Naive thymus-derived CD4-positive, alpha-beta T cell (primary cell): ENCODE measurements at regions of chr16 and their contacts with region 1.

Region 1: DNA sequence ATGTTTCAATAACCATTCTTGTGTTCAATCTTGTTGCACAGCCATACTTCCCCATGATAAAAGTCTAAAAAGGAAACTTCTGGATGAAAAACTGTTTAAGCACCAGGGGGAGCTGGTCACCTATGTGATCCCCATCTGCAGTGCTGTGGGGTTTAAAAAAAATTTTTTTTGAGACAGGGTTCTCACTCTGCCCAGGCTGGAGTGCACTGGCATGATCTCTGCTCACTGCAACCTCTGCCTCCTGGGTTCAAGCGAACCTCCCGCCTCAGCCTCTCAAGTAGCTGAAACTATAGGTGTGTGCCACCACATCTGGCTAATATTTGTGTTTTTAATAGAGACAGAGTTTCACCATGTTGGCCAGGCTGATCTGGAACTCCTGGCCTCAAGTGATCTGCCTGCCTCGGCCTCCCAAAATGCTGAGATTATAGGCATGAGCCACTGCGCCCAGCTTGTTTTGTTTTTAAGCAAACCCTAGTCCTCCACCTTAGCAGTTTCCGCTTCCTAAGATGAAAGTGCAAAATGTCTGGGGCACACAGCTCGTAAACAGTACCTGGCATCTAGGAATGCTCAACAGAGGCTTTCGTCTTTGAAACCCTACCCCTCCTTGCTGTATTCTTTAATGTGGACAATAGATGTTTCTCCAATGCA is 25.4 kb downstream of the DNAJA2 start:
- DNase-seq: peak in 7 of 9 donors; percentile 11 to 49 (median 42)
- ATAC-seq: peak; percentile 89
- H3K4me3 ChIP-seq: no peak overlapping the region
- H3K4me3 Mint-ChIP-seq: no peak overlapping the region
- H3K27ac ChIP-seq: no peak overlapping the region
- H3K27ac Mint-ChIP-seq: no peak overlapping the region
- H3K4me1 ChIP-seq: no peaks in the 10 kb centered on the region
- H3K4me1 Mint-ChIP-seq: peaks cover 0 to 13% (median under 1%) of the 10 kb centered on the region in 7 donors
- H3K27me3 ChIP-seq: no peaks in the 10 kb centered on the region
- H3K27me3 Mint-ChIP-seq: no peaks in the 10 kb centered on the region

Region 2: GRCh38 chr16:46774743-46775177 is 173.3 kb before region 1 on chr16:
- CTCF ChIA-PET with region 1: no interaction called
- POLR2A ChIA-PET with region 1: no interaction called
- intact Hi-C with region 1: no loop called
- DNase-seq: no peak
- ATAC-seq: no peak
- H3K4me3 ChIP-seq: no peak overlapping the region
- H3K4me3 Mint-ChIP-seq: no peak overlapping the region
- H3K27ac ChIP-seq: no peak overlapping the region
- H3K27ac Mint-ChIP-seq: no peak overlapping the region
- H3K4me1 ChIP-seq: no peaks in the 10 kb centered on the region
- H3K4me1 Mint-ChIP-seq: no peaks in the 10 kb centered on the region
- H3K27me3 ChIP-seq: no peaks in the 10 kb centered on the region
- H3K27me3 Mint-ChIP-seq: peaks cover 0 to 7% (median 0%) of the 10 kb centered on the region in 5 donors

Region 3: GRCh38 chr16:47018223-47018891 is 70.3 kb after region 1 on chr16:
- CTCF ChIA-PET with region 1: interaction called, 3 read pairs
- POLR2A ChIA-PET with region 1: no interaction called
- intact Hi-C with region 1: loop called in 1 of 2 experiments (anchors 1 kb)
- DNase-seq: peak in 3 of 9 donors; percentile 5 to 18 (median 10)
- ATAC-seq: peak; percentile 82
- H3K4me3 ChIP-seq: no peak overlapping the region
- H3K4me3 Mint-ChIP-seq: no peak overlapping the region
- H3K27ac ChIP-seq: no peak overlapping the region
- H3K27ac Mint-ChIP-seq: no peak overlapping the region
- H3K4me1 ChIP-seq: peaks cover 0 to 15% of the 10 kb centered on the region in 2 donors
- H3K4me1 Mint-ChIP-seq: peaks cover 6 to 22% (median 11%) of the 10 kb centered on the region in 7 donors
- H3K27me3 ChIP-seq: no peaks in the 10 kb centered on the region
- H3K27me3 Mint-ChIP-seq: peaks cover 0 to 3% (median 0%) of the 10 kb centered on the region in 5 donors

Region 4: GRCh38 chr16:48156790-48157209 is 1208.8 kb after region 1 on chr16:
- CTCF ChIA-PET with region 1: interaction called, 4 read pairs
- POLR2A ChIA-PET with region 1: no interaction called
- intact Hi-C with region 1: loop called in 1 of 2 experiments (anchors 1 kb)
- DNase-seq: peak; percentile 33 to 89 (median 69)
- ATAC-seq: peak; percentile 88
- H3K4me3 ChIP-seq: no peak overlapping the region
- H3K4me3 Mint-ChIP-seq: no peak overlapping the region
- H3K27ac ChIP-seq: no peak overlapping the region
- H3K27ac Mint-ChIP-seq: no peak overlapping the region
- H3K4me1 ChIP-seq: no peaks in the 10 kb centered on the region
- H3K4me1 Mint-ChIP-seq: peaks cover 0 to 23% (median 0%) of the 10 kb centered on the region in 7 donors
- H3K27me3 ChIP-seq: no peaks in the 10 kb centered on the region
- H3K27me3 Mint-ChIP-seq: peaks cover 0 to 41% (median 9%) of the 10 kb centered on the region in 5 donors

Region 5: GRCh38 chr16:48164907-48165726 is 1217.1 kb after region 1 on chr16:
- CTCF ChIA-PET with region 1: interaction called, 6 read pairs
- POLR2A ChIA-PET with region 1: no interaction called
- intact Hi-C with region 1: loop called in 1 of 2 experiments (anchors 1 kb)
- DNase-seq: peak; percentile 20 to 71 (median 45)
- ATAC-seq: peak; percentile 87
- H3K4me3 ChIP-seq: no peak overlapping the region
- H3K4me3 Mint-ChIP-seq: peak overlapping the region in 1 of 10 donors; percentile 32
- H3K27ac ChIP-seq: no peak overlapping the region
- H3K27ac Mint-ChIP-seq: peak overlapping the region in 2 of 9 donors; percentile 50 to 88
- H3K4me1 ChIP-seq: no peaks in the 10 kb centered on the region
- H3K4me1 Mint-ChIP-seq: peaks cover 0 to 8% (median 4%) of the 10 kb centered on the region in 7 donors
- H3K27me3 ChIP-seq: no peaks in the 10 kb centered on the region
- H3K27me3 Mint-ChIP-seq: peaks cover 4 to 8% (median 4%) of the 10 kb centered on the region in 5 donors